CD4-positive, alpha-beta memory T cell (primary cell): ENCODE measurements at regions of chr14 and their contacts with region 1.

Region 1: DNA sequence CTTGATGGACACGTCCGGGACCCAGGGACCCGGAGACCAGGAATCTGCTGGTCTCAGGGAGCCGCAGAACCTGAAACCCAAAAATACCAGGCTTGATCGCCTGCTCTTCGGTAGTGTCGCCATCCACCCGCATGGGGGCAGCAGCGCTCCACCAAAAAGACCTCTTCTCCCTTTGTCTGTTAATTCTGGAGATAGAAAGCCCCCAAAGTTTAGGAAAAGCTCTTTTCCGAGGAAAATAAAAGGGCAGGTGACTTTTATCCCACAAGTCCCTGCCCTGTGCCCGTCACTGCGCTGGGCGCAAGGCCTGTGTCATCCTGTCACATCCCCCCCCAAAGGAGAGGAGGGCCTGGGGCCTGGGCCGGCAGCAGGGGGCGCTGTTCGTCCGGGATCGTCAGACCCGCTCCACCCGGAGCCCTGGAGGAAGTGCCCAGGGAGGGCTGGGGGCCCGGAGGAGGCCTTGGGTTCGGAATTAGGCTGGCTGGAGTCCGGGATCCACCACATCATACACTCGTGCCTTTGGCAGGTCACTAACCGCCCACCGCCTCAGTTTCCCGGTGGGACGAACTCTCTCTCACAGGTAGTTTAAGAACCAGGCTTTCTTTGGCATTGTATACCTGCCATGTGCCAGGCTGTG is 31.9 kb downstream of the DAD1 start:
- DNase-seq: peak; percentile 87 to 96 (median 91)
- H3K4me3 ChIP-seq: peak overlapping the region; percentile 80 to 85
- H3K4me3 Mint-ChIP-seq: peak overlapping the region; percentile 77 to 96 (median 88)
- H3K27ac ChIP-seq: peak overlapping the region; percentile 97
- H3K27ac Mint-ChIP-seq: peak overlapping the region; percentile 98 to 100 (median 100)
- H3K4me1 ChIP-seq: peaks cover 97% of the 10 kb centered on the region
- H3K4me1 Mint-ChIP-seq: peaks cover 75 to 97% (median 86%) of the 10 kb centered on the region in 4 donors
- H3K27me3 ChIP-seq: no peaks in the 10 kb centered on the region
- H3K27me3 Mint-ChIP-seq: peaks cover 2 to 4% of the 10 kb centered on the region in 2 donors

Region 2: GRCh38 chr14:21723431-21724045 is 833.6 kb before region 1 on chr14:
- CTCF ChIA-PET with region 1: interaction called, 8 read pairs
- POLR2A ChIA-PET with region 1: interaction called, 17 read pairs
- intact Hi-C with region 1: no loop called
- DNase-seq: peak in 3 of 5 donors; percentile 37 to 62 (median 39)
- H3K4me3 ChIP-seq: no peak overlapping the region
- H3K4me3 Mint-ChIP-seq: peak overlapping the region; percentile 56 to 83 (median 78)
- H3K27ac ChIP-seq: peak overlapping the region; percentile 22
- H3K27ac Mint-ChIP-seq: peak overlapping the region; percentile 4 to 90 (median 58)
- H3K4me1 ChIP-seq: no peaks in the 10 kb centered on the region
- H3K4me1 Mint-ChIP-seq: peaks cover 0 to 9% (median 0%) of the 10 kb centered on the region in 4 donors
- H3K27me3 ChIP-seq: no peaks in the 10 kb centered on the region
- H3K27me3 Mint-ChIP-seq: peaks cover 15 to 16% of the 10 kb centered on the region in 2 donors

Region 3: GRCh38 chr14:21868442-21869046 is 688.6 kb before region 1 on chr14:
- CTCF ChIA-PET with region 1: interaction called, 5 read pairs
- POLR2A ChIA-PET with region 1: interaction called, 26 read pairs
- intact Hi-C with region 1: loop called (anchors 1 kb)
- DNase-seq: peak; percentile 64 to 82 (median 68)
- H3K4me3 ChIP-seq: no peak overlapping the region
- H3K4me3 Mint-ChIP-seq: peak overlapping the region; percentile 59 to 83 (median 74)
- H3K27ac ChIP-seq: no peak overlapping the region
- H3K27ac Mint-ChIP-seq: peak overlapping the region in 6 of 7 donors; percentile 53 to 83 (median 66)
- H3K4me1 ChIP-seq: peaks cover 31% of the 10 kb centered on the region
- H3K4me1 Mint-ChIP-seq: peaks cover 9 to 45% (median 24%) of the 10 kb centered on the region in 4 donors
- H3K27me3 ChIP-seq: no peaks in the 10 kb centered on the region
- H3K27me3 Mint-ChIP-seq: peaks cover 0 to 1% of the 10 kb centered on the region in 2 donors

Region 4: GRCh38 chr14:21997300-21997699 is 559.8 kb before region 1 on chr14:
- CTCF ChIA-PET with region 1: interaction called, 15 read pairs
- POLR2A ChIA-PET with region 1: interaction called, 37 read pairs
- intact Hi-C with region 1: loop called (anchors 2 kb)
- DNase-seq: peak; percentile 33 to 58 (median 52)
- H3K4me3 ChIP-seq: peak overlapping the region in 1 of 2 donors; percentile 27
- H3K4me3 Mint-ChIP-seq: peak overlapping the region; percentile 87 to 96 (median 92)
- H3K27ac ChIP-seq: peak overlapping the region; percentile 51
- H3K27ac Mint-ChIP-seq: peak overlapping the region in 6 of 7 donors; percentile 86 to 97 (median 92)
- H3K4me1 ChIP-seq: peaks cover 18% of the 10 kb centered on the region
- H3K4me1 Mint-ChIP-seq: peaks cover 5 to 15% (median 8%) of the 10 kb centered on the region in 4 donors
- H3K27me3 ChIP-seq: no peaks in the 10 kb centered on the region
- H3K27me3 Mint-ChIP-seq: no peaks in the 10 kb centered on the region

Region 5: DNA sequence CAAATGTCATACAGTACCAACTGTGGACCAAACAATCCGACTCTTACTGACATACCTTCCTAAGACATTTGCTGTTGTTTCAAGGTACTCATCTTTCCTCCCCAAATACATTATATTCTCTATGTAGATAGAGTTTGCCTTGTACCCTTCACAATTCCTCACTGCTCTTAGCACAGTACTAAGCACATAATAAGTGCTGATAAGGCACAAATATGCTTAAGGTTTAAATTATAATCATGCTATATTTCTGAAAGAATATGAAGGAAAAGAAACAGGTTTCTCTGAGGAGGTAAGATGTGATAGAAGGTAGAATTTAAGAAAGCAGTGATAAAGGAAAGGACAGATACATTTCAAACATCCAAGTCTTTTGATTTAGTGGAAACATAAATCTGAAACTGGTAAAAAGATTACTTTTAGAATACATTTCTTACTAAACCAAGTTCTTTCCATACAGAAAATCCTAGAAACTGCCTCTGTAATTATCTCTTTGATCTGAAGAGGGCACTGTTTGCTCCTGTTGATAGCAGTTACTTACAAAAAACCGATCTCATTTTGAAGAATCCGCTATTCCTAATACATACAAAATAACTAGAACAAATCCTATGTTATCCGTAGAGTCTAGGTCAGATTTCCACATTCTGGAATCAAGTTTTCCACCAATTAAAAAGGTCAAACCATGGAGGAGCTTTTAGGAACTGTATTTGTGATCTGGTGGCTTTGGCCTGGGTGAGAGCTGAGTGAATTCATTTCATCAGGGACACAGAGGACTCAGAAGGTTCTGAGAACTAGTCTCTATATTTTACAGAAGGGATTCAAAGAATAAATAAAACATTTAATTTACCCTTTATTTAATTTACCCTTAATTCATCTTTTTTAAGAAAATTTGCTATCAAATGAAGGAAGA is 279.9 kb before region 1 on chr14:
- CTCF ChIA-PET with region 1: no interaction called
- POLR2A ChIA-PET with region 1: interaction called, 13 read pairs
- intact Hi-C with region 1: no loop called
- DNase-seq: no peak
- H3K4me3 ChIP-seq: no peak overlapping the region
- H3K4me3 Mint-ChIP-seq: peak overlapping the region in 1 of 8 donors; percentile 16
- H3K27ac ChIP-seq: no peak overlapping the region
- H3K27ac Mint-ChIP-seq: no peak overlapping the region
- H3K4me1 ChIP-seq: no peaks in the 10 kb centered on the region
- H3K4me1 Mint-ChIP-seq: no peaks in the 10 kb centered on the region
- H3K27me3 ChIP-seq: no peaks in the 10 kb centered on the region
- H3K27me3 Mint-ChIP-seq: no peaks in the 10 kb centered on the region

Region 6: DNA sequence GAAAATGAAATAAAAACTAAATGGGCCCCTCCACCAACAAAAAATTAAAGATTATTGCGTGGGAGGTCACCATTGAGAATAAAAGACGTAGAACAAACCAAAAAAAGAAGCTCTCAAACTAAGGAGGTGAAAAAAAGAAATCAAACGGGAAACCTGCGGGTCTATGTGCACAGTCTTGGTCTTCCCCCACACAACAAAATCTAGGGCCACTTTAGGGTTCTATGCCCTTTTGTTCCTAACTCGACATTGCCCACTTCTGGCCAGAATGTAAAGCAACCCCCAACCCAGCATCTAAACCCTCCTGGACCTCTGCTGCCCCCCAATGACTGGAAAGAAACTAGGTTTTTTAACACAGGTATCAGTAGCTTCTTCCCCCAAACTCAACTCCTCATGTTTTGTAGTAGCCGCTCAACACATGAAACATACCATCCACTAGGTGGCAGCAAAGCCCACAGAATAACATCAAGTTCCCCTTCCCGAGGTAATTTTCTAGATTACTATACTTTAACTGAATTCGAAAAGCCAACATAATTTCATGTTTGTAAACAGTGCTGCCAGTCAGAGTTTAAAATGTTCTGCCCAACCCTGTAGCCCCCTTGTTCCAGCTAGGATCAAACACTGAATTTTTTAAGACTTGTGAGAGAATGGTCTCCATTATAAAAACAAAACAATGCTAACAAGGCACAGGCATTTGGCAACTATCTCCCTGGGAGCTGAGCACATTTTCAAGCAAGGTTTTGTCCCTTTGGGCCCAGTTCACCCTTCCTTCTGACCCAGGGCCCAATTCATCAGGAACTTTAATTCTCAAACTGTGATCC is 13.2 kb after region 1 on chr14:
- CTCF ChIA-PET with region 1: interaction called, 305 read pairs
- POLR2A ChIA-PET with region 1: interaction called, 1,226 read pairs
- intact Hi-C with region 1: loop called (anchors 1 kb)
- DNase-seq: peak; percentile 94 to 97 (median 96)
- H3K4me3 ChIP-seq: peak overlapping the region; percentile 6 to 41
- H3K4me3 Mint-ChIP-seq: peak overlapping the region; percentile 54 to 85 (median 80)
- H3K27ac ChIP-seq: peak overlapping the region; percentile 69
- H3K27ac Mint-ChIP-seq: peak overlapping the region; percentile 95 to 100 (median 98)
- H3K4me1 ChIP-seq: peaks cover 52% of the 10 kb centered on the region
- H3K4me1 Mint-ChIP-seq: peaks cover 38 to 57% (median 46%) of the 10 kb centered on the region in 4 donors
- H3K27me3 ChIP-seq: no peaks in the 10 kb centered on the region
- H3K27me3 Mint-ChIP-seq: no peaks in the 10 kb centered on the region

Region 7: GRCh38 chr14:22689186-22689585 is 132.1 kb after region 1 on chr14:
- CTCF ChIA-PET with region 1: no interaction called
- POLR2A ChIA-PET with region 1: no interaction called
- intact Hi-C with region 1: no loop called
- DNase-seq: no peak
- H3K4me3 ChIP-seq: no peak overlapping the region
- H3K4me3 Mint-ChIP-seq: no peak overlapping the region
- H3K27ac ChIP-seq: no peak overlapping the region
- H3K27ac Mint-ChIP-seq: no peak overlapping the region
- H3K4me1 ChIP-seq: no peaks in the 10 kb centered on the region
- H3K4me1 Mint-ChIP-seq: no peaks in the 10 kb centered on the region
- H3K27me3 ChIP-seq: no peaks in the 10 kb centered on the region
- H3K27me3 Mint-ChIP-seq: peaks cover 42 to 43% of the 10 kb centered on the region in 2 donors

Region 8: GRCh38 chr14:22900081-22900799 is 343.1 kb after region 1 on chr14:
- CTCF ChIA-PET with region 1: interaction called, 13 read pairs
- POLR2A ChIA-PET with region 1: interaction called, 6 read pairs
- intact Hi-C with region 1: no loop called
- DNase-seq: peak; percentile 66 to 72 (median 67)
- H3K4me3 ChIP-seq: no peak overlapping the region
- H3K4me3 Mint-ChIP-seq: no peak overlapping the region
- H3K27ac ChIP-seq: no peak overlapping the region
- H3K27ac Mint-ChIP-seq: peak overlapping the region; percentile 12 to 65 (median 54)
- H3K4me1 ChIP-seq: peaks cover 4% of the 10 kb centered on the region
- H3K4me1 Mint-ChIP-seq: peaks cover 5 to 15% (median 5%) of the 10 kb centered on the region in 4 donors
- H3K27me3 ChIP-seq: no peaks in the 10 kb centered on the region
- H3K27me3 Mint-ChIP-seq: no peaks in the 10 kb centered on the region